ENCODE measurements at regions of chr4 and their contacts with region 1.

Region 1: DNA sequence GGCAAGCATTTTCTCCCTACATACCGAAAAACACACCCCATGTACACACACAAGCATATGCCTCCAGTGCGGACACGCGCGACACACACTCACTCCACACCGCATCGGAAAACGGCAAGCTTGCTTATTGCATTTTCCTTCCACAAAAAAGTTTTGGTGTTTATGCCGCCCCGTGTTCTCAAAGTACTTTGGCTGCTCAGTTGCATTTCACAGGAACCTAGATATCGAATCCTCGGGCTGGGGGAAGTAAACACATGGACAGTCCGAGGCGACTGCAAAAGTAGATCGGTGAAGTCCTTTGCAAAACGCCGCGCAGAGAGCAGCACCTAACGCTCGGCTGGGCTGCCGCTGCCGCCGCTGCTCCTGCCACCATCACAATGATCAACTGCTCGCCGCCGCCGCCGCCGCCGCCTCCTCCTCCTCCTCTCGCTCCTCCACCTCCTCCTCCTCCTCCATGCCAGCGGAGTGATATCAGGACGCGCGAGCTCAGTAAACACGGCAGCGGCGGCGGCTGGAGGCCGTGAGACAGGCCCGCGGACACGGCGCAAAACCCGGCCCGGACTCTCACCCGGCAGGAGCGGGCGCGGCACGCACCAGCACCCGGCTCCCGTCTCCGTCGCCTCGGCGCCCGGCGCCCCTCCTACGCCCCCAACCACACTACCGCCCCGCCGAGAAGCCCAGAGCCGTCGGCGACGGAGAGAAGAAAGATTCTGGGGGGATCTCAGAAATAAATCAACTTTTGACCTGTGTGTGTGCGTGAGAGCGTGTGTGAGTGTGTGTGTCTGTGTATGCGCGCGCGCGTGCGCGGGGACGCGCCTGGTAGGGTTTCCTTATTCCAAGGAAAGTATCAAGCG is at the start of gene MAML3:
- DNase-seq: peak; percentile 71 to 92 (median 81)
- ATAC-seq: peak; percentile 23
- H3K4me3 ChIP-seq: peak within 1 kb of the TSS; percentile 60
- H3K4me3 Mint-ChIP-seq: peak within 1 kb of the TSS; percentile 97
- H3K27ac ChIP-seq: peak within 1 kb of the TSS in 1 of 2 donors; percentile 89
- H3K27ac Mint-ChIP-seq: peak within 1 kb of the TSS; percentile 97
- H3K4me1 ChIP-seq: peaks cover 51% of the 10 kb centered on the region
- H3K4me1 Mint-ChIP-seq: peaks cover 45% of the 10 kb centered on the region
- H3K27me3 ChIP-seq: no peaks in the 10 kb centered on the region
- H3K27me3 Mint-ChIP-seq: no peaks in the 10 kb centered on the region
- CTCF ChIP-seq: no peak
- total RNA-seq, gene MAML3: 2.5 to 2.9 TPM

Region 2: DNA sequence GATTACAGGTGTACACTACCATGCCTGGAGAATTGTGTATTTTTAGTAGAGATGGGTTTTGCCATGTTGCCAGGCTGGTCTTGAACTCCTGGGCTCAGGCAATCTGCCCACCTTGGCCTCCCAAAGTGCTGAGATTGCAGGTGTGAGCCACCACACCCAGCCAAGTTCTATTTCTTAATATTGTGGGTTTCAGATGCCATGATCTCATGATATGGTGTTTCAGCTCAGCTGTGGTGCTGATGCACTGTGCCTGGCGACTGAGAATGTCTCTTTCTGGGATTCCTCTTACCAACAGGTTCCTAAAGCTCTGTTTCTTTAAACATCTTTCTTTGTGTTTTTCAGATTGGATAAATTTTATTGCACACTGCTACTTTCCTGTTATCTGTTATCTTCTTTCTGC is 834.4 kb before region 1 on chr4:
- CTCF ChIA-PET with region 1: no interaction called
- POLR2A ChIA-PET with region 1: no interaction called
- intact Hi-C with region 1: no loop called
- DNase-seq: no peak
- ATAC-seq: no peak
- H3K4me3 ChIP-seq: no peak overlapping the region
- H3K4me3 Mint-ChIP-seq: no peak overlapping the region
- H3K27ac ChIP-seq: no peak overlapping the region
- H3K27ac Mint-ChIP-seq: peak overlapping the region; percentile 25
- H3K4me1 ChIP-seq: peaks cover 39% of the 10 kb centered on the region
- H3K4me1 Mint-ChIP-seq: peaks cover 75% of the 10 kb centered on the region
- H3K27me3 ChIP-seq: no peaks in the 10 kb centered on the region
- H3K27me3 Mint-ChIP-seq: no peaks in the 10 kb centered on the region
- CTCF ChIP-seq: no peak

Region 3: GRCh38 chr4:139453371-139454110 is 700.4 kb before region 1 on chr4:
- CTCF ChIA-PET with region 1: no interaction called
- POLR2A ChIA-PET with region 1: interaction called, 3 read pairs
- intact Hi-C with region 1: loop called in 1 of 2 experiments (anchors 10 kb)
- DNase-seq: peak; percentile 93 to 98 (median 96)
- ATAC-seq: peak; percentile 85
- H3K4me3 ChIP-seq: peak overlapping the region; percentile 90
- H3K4me3 Mint-ChIP-seq: peak overlapping the region; percentile 96
- H3K27ac ChIP-seq: peak overlapping the region; percentile 93
- H3K27ac Mint-ChIP-seq: peak overlapping the region; percentile 99
- H3K4me1 ChIP-seq: peaks cover 35% of the 10 kb centered on the region
- H3K4me1 Mint-ChIP-seq: peaks cover 80% of the 10 kb centered on the region
- H3K27me3 ChIP-seq: no peaks in the 10 kb centered on the region
- H3K27me3 Mint-ChIP-seq: no peaks in the 10 kb centered on the region
- CTCF ChIP-seq: peak; percentile 4

Region 4: DNA sequence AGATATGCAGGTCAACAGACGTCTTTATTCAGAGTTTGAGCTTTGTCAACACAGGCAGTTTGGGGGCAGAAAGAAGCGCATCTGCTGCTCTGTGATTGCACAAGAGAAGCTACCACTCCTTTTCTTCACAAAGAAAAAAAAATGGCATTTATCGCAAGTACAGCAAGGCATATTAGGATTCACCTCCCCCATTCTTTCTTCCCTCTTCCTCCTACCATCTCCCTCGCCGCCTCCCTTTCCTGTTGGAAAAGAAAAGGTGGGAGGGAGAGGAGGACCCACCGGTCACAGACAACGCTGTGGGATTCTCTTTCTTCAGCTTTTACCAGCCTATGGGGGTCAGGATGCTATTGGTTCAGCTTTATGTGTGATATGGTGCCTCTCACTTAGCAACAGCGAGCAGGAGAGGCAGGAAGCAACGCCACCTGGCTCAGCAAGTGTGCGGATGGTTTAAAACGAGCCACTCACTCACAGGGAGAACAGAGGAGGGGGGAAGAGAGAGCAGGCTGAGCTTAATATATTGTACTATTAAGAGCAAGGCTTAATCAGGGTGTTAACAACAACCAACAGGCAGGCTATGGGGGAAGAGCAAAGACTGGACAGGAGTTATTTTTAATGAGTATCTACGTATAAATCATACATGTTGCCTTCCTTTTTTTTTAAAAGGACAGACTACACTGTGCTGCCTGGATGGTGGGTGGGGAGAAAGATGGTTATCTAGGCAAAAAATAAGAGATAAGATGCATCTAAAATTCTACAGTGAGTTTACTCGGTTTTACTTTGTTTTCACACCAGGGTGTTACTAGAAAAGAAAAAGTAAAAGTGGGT is 104.7 kb before region 1 on chr4:
- CTCF ChIA-PET with region 1: no interaction called
- POLR2A ChIA-PET with region 1: interaction called, 24 read pairs
- intact Hi-C with region 1: loop called (anchors 1 to 5 kb)
- DNase-seq: peak; percentile 14 to 72 (median 44)
- ATAC-seq: peak; percentile 99
- H3K4me3 ChIP-seq: peak overlapping the region; percentile 28
- H3K4me3 Mint-ChIP-seq: peak overlapping the region; percentile 83
- H3K27ac ChIP-seq: peak overlapping the region in 1 of 2 donors; percentile 9
- H3K27ac Mint-ChIP-seq: peak overlapping the region; percentile 79
- H3K4me1 ChIP-seq: peaks cover 14% of the 10 kb centered on the region
- H3K4me1 Mint-ChIP-seq: peaks cover 48% of the 10 kb centered on the region
- H3K27me3 ChIP-seq: no peaks in the 10 kb centered on the region
- H3K27me3 Mint-ChIP-seq: no peaks in the 10 kb centered on the region
- CTCF ChIP-seq: no peak

Region 5: DNA sequence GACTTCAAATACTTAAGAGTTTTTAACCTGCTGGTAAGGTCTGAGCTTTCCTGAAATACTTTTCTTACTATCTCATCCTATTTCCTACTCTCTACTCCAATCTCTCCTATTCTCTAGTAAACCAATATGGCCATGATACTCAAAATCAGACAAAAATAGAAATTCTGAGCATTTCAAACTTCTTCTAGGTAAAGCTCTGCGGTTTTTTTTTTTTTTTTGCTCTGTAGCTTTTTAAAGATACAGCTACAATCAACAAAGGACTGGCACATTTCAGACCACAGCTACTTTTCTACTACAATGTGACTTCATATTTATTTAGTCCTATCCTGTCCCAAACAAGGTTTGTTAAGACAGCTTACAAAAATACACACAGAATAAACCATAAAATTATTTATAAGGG is 31.1 kb before region 1 on chr4:
- CTCF ChIA-PET with region 1: interaction called, 3 read pairs
- POLR2A ChIA-PET with region 1: interaction called, 13 read pairs
- intact Hi-C with region 1: loop called in 1 of 2 experiments (anchors 1 kb)
- DNase-seq: no peak
- ATAC-seq: peak; percentile 39
- H3K4me3 ChIP-seq: no peak overlapping the region
- H3K4me3 Mint-ChIP-seq: peak overlapping the region; percentile 4
- H3K27ac ChIP-seq: no peak overlapping the region
- H3K27ac Mint-ChIP-seq: no peak overlapping the region
- H3K4me1 ChIP-seq: no peaks in the 10 kb centered on the region
- H3K4me1 Mint-ChIP-seq: peaks cover 15% of the 10 kb centered on the region
- H3K27me3 ChIP-seq: no peaks in the 10 kb centered on the region
- H3K27me3 Mint-ChIP-seq: no peaks in the 10 kb centered on the region
- CTCF ChIP-seq: no peak

Region 6: DNA sequence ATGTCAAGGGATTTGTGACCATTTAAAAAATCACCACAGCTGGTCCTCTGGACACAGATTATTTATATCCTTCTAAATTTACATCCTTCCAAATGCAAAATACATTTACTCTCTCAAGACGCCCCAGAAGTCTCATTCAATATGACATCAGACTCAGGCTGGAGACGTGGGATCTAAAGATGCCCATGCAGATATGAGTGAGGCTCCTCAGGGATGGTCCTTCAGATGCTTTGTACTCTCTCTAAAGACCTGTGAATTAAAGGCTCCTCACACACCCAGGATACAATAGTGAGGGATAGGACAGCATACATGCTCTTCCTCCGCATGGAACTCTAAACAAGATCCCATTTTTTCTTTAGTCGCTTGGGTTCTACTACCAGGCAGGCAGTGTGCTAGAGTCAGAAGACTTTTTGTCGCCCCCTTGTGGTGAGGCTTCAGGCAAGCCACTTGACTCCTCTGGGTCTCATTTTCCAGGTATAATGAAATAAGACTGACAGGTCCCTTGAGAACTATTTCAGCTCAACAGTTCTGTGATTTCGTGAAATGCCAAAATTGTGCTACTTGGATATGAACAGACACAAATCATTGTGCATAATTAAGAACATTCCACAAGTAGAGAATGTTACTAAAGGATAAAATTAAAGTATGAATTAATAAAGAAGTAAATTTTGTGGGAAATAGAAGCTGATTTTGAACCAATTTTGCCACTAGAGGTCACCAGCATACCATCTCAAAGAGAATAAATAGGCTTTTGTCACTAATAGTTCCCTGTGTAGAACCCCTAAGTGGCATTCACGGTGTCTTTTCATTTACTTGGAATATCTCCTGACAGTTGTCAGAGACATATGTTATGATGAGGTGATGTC is 205.8 kb after region 1 on chr4:
- CTCF ChIA-PET with region 1: no interaction called
- POLR2A ChIA-PET with region 1: no interaction called
- intact Hi-C with region 1: loop called in 1 of 2 experiments (anchors 5 kb)
- DNase-seq: peak; percentile 57 to 89 (median 71)
- ATAC-seq: peak; percentile 94
- H3K4me3 ChIP-seq: no peak overlapping the region
- H3K4me3 Mint-ChIP-seq: no peak overlapping the region
- H3K27ac ChIP-seq: no peak overlapping the region
- H3K27ac Mint-ChIP-seq: no peak overlapping the region
- H3K4me1 ChIP-seq: no peaks in the 10 kb centered on the region
- H3K4me1 Mint-ChIP-seq: no peaks in the 10 kb centered on the region
- H3K27me3 ChIP-seq: no peaks in the 10 kb centered on the region
- H3K27me3 Mint-ChIP-seq: no peaks in the 10 kb centered on the region
- CTCF ChIP-seq: peak; percentile 98